ENCODE measurements at regions of chr22 and their contacts with region 1.

Region 1: DNA sequence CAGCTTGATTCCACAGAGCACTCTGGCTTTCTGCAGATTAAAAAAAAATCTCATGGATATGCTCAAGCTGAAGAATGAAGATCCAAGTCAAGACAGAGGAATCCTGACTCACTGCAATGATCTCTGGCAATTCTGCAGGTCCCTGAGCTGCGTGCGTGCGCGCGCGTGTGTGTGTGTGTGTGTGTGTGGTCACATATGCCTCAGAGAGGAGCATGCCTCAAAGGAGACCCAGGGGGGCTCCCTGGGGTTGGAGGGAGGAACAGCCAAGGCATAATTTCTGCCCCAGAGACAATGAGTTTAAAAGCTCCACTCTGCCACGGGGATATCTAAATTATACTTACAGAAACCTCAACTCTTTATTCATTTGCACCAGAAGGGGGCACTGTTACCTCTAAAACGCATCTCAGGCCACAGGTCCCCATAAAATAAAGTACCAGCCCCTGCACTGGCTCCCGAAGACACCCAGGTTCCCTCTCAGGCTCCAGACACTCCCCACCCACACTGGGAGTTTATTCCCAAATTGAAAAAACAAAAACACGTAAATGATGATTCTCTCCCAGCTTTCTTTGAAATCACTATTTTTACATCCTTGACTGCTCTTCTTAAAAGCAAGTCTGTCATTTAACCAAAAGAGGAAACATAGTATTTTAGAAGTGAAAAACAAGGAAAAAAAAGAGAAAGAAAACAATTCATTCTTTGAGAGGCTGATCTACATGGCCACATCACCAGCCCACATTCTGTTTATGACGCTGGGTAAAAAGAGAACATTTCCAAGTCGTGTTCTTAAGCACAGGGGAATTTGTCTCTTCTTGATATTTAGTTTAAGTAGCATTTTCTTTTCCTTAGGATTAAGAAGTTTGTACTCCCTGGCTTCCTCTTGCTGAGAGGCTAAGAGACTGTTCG is 401.0 kb downstream of the LARGE1 start:
- DNase-seq: peak; percentile 84
- H3K4me3 ChIP-seq: no peak overlapping the region
- H3K27ac ChIP-seq: peak overlapping the region; percentile 57
- H3K4me1 ChIP-seq: peaks cover 40% of the 10 kb centered on the region
- CTCF ChIP-seq: peak; percentile 90

Region 2: DNA sequence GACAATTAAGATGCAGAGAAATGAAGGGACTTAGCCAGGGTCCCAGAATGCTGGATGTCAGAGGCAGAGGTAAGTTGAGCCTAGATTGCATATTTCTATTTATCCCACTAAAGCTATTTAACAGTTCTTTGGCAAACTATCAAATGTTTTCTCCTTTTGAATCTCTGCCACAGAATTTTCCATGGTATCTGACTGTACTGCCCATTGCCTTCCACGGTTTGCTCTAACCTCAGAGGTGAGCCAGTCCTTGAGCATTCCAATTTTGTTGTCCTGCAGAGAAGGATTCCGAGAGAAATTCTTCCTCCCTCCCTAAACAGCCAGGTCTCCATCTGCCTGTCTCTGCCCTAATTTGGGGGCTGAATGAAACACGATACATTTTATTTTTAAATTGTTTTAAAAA is 92.9 kb before region 1 on chr22:
- CTCF ChIA-PET with region 1: no interaction called
- POLR2A ChIA-PET with region 1: no interaction called
- intact Hi-C with region 1: no loop called
- DNase-seq: no peak
- H3K4me3 ChIP-seq: no peak overlapping the region
- H3K27ac ChIP-seq: no peak overlapping the region
- H3K4me1 ChIP-seq: no peaks in the 10 kb centered on the region
- CTCF ChIP-seq: no peak

Region 3: GRCh38 chr22:33565580-33565995 is 46.3 kb after region 1 on chr22:
- CTCF ChIA-PET with region 1: interaction called, 3 read pairs
- POLR2A ChIA-PET with region 1: interaction called, 12 read pairs
- intact Hi-C with region 1: loop called (anchors 1 kb)
- DNase-seq: no peak
- H3K4me3 ChIP-seq: no peak overlapping the region
- H3K27ac ChIP-seq: no peak overlapping the region
- H3K4me1 ChIP-seq: peaks cover 62% of the 10 kb centered on the region
- CTCF ChIP-seq: no peak

Region 4: GRCh38 chr22:33579448-33580093 is 60.2 kb after region 1 on chr22:
- CTCF ChIA-PET with region 1: interaction called, 16 read pairs
- POLR2A ChIA-PET with region 1: interaction called, 10 read pairs
- intact Hi-C with region 1: loop called (anchors 1 kb)
- DNase-seq: peak; percentile 80
- H3K4me3 ChIP-seq: no peak overlapping the region
- H3K27ac ChIP-seq: no peak overlapping the region
- H3K4me1 ChIP-seq: peaks cover 52% of the 10 kb centered on the region
- CTCF ChIP-seq: peak; percentile 98

Region 5: DNA sequence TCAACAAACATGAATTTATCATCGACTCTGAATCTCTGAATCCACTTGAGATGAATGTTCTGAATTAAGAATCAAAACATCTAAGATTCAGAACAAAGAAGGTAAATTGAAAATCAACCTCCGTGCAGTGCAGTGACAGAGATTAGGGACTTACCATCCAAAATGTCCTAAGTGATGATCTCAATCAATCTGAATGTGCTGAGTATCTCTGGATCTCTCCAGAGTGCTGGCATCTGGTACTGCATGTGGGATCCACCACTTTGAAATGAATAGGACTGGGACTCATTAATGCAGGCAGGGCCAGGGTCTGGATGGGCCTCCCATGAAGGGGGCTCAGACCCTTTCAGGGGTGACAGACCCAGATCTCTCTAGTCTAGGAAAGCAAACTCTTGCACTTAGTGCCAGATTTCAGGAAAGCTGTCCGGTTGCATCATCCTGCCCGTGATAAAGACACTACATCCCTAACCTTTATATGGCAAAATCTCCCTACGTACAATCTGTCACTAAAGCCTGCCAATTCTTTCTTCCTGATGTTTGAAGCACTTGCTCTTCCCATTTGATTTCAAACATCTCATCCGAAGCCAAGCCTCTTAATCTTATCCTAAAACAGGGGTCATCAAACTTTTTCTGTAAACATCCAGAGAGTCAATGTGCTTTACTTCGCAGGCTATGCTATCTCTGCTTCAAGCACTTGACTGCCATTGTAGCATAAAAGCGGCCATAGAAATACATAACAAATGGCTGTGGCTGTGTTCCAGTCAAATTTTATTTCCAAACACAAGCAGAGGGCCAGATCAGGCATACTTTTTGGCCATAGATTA is 137.7 kb after region 1 on chr22:
- CTCF ChIA-PET with region 1: no interaction called
- POLR2A ChIA-PET with region 1: no interaction called
- intact Hi-C with region 1: no loop called
- DNase-seq: no peak
- H3K4me3 ChIP-seq: no peak overlapping the region
- H3K27ac ChIP-seq: no peak overlapping the region
- H3K4me1 ChIP-seq: no peaks in the 10 kb centered on the region
- CTCF ChIP-seq: no peak

Region 6: DNA sequence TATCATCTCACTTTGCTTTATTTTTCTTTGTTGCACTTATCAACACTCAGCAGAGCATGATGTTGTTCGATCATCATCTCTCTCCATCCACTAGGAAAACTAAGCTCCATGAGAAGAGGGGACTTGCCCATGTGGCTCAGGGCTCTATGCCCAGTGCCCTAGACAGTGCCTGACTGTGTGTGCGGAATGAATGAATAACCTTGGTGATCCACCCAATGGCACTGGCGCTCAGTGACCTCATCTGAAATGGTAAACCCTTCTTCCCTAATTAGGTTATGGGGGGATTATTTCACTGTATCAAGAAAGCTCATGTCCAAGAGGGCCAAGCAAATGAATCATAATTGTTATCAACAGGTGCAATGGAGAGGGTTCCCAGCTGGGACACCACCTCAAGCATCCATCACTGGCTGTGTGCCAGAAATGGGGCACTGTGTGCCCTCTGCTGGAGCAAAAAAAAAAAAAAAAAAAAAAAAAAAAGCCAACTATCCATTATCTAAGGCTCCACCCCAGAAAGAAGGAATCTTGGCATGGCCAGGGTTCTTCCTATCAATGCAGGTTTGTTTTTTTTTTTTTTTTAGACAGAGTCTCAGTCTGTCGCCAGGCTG is 228.4 kb after region 1 on chr22:
- CTCF ChIA-PET with region 1: no interaction called
- POLR2A ChIA-PET with region 1: no interaction called
- intact Hi-C with region 1: loop called (anchors 1 kb)
- DNase-seq: peak; percentile 58
- H3K4me3 ChIP-seq: no peak overlapping the region
- H3K27ac ChIP-seq: no peak overlapping the region
- H3K4me1 ChIP-seq: peaks cover 16% of the 10 kb centered on the region
- CTCF ChIP-seq: peak; percentile 36

Region 7: GRCh38 chr22:33832558-33833151 is 313.3 kb after region 1 on chr22:
- CTCF ChIA-PET with region 1: no interaction called
- POLR2A ChIA-PET with region 1: no interaction called
- intact Hi-C with region 1: no loop called
- DNase-seq: no peak
- H3K4me3 ChIP-seq: no peak overlapping the region
- H3K27ac ChIP-seq: no peak overlapping the region
- H3K4me1 ChIP-seq: no peaks in the 10 kb centered on the region
- CTCF ChIP-seq: no peak

Region 8: DNA sequence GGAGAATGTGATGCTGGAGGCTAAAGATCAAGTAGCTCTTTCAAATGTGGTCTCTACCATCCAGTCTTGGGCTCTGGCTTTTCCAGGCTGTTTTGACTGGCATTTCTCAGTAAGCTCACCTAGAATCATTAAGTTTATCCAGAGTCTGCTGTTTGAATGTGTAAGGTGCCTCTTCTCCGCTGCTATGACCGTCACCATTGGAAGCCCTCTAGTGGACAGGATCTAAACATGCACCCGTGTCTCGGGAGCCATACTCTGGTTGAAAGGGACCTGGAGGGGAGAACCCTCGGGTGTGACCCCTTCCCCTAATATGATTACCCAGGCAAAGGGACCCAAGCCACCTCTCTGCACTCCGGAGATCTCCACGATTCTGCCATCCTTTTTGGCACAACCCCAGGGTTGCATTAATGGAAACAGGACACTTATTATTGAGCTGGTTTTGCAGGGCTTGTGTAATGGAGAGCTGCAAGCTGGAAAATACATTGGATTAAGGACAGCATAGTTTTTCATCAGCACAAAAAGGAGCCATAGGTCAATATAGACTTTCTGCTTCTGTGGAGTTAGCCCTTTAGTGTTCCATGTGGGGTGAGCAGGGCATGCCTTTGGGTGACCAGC is 592.0 kb after region 1 on chr22:
- CTCF ChIA-PET with region 1: no interaction called
- POLR2A ChIA-PET with region 1: no interaction called
- intact Hi-C with region 1: loop called (anchors 5 kb)
- DNase-seq: peak; percentile 50
- H3K4me3 ChIP-seq: no peak overlapping the region
- H3K27ac ChIP-seq: no peak overlapping the region
- H3K4me1 ChIP-seq: no peaks in the 10 kb centered on the region
- CTCF ChIP-seq: peak; percentile 87

Measured in OCI-LY7 (cell line).